ENCODE measurements at regions of chr9 and their contacts with region 1.

Region 1: DNA sequence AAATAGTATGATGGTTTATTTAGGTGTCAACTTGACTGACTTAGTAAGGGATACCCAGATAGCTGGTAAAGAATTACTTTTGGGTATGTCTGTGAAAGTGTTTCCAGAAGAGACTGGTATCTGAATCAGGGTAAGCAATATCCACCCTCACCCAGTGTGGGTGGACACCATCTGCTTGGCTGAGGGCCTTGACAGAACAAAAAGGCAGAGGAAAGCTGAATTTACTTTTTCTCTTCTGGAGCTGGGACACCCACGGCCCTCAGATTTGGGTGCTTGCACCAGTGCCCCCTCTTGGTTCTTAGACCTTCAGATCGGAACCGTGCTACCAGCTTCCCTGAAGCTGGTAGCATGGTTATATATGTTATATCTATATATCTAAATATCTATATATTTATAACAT is 489.5 kb upstream of the MPDZ start:
- DNase-seq: no peak
- ATAC-seq: no peak
- H3K4me3 Mint-ChIP-seq: no peak overlapping the region
- H3K27ac Mint-ChIP-seq: no peak overlapping the region
- H3K4me1 Mint-ChIP-seq: no peaks in the 10 kb centered on the region
- H3K27me3 Mint-ChIP-seq: no peaks in the 10 kb centered on the region
- CTCF ChIP-seq: no peak

Region 2: GRCh38 chr9:13817754-13818278 is 48.8 kb after region 1 on chr9:
- CTCF ChIA-PET with region 1: no interaction called
- POLR2A ChIA-PET with region 1: no interaction called
- intact Hi-C with region 1: loop called (anchors 5 kb)
- DNase-seq: no peak
- ATAC-seq: no peak
- H3K4me3 Mint-ChIP-seq: no peak overlapping the region
- H3K27ac Mint-ChIP-seq: no peak overlapping the region
- H3K4me1 Mint-ChIP-seq: no peaks in the 10 kb centered on the region
- H3K27me3 Mint-ChIP-seq: no peaks in the 10 kb centered on the region
- CTCF ChIP-seq: no peak